ENCODE measurements at regions of chr17 and their contacts with region 1.

Region 1: DNA sequence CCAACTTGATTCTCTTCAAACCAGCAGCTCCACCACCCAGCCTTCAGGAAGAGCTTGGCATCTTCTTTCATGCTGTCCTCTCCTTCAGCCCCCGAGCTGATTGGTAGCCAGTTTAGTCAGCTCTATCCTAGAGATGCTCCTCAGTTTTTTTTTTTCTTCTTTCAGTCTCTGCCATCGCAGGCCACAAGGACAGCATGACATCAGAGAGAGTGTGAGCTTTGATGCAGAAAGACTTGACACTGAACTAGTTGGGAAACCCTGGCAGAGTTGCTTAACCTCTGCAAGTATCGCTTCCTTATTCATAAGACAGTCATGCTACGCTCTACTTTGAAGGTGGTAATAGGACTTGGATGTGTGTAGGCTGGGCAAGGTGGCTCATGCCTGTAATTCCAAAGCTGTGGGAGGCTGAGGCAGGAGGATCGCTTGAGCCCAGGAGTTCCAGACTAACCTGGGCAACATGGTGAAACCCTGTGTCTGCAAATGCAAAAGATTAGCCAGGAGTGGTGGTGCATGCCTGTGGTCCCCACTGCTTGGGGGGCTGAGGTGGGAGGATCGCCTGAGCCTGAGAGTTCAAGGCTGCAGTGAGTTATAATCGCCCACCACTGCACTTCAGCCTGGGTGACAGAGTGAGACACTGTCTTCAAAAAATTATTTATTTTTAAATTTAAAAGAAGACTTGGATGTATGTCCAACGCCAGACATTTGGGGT is 2.6 kb downstream of the CD300LB start:
- DNase-seq: no peak
- H3K4me3 Mint-ChIP-seq: no peak overlapping the region
- H3K27ac Mint-ChIP-seq: no peak overlapping the region
- H3K4me1 Mint-ChIP-seq: peaks cover 6% of the 10 kb centered on the region
- H3K27me3 Mint-ChIP-seq: peaks cover 33% of the 10 kb centered on the region

Region 2: GRCh38 chr17:74379495-74380085 is 149.1 kb before region 1 on chr17:
- intact Hi-C with region 1: loop called (anchors 1 kb)
- DNase-seq: peak; percentile 83
- H3K4me3 Mint-ChIP-seq: no peak overlapping the region
- H3K27ac Mint-ChIP-seq: no peak overlapping the region
- H3K4me1 Mint-ChIP-seq: no peaks in the 10 kb centered on the region
- H3K27me3 Mint-ChIP-seq: peaks cover 7% of the 10 kb centered on the region

Region 3: GRCh38 chr17:74437702-74438101 is 90.9 kb before region 1 on chr17:
- intact Hi-C with region 1: loop called (anchors 5 kb)
- DNase-seq: no peak
- H3K4me3 Mint-ChIP-seq: no peak overlapping the region
- H3K27ac Mint-ChIP-seq: no peak overlapping the region
- H3K4me1 Mint-ChIP-seq: no peaks in the 10 kb centered on the region
- H3K27me3 Mint-ChIP-seq: peaks cover 26% of the 10 kb centered on the region